ENCODE measurements at regions of chr12 and their contacts with region 1.

Region 1: DNA sequence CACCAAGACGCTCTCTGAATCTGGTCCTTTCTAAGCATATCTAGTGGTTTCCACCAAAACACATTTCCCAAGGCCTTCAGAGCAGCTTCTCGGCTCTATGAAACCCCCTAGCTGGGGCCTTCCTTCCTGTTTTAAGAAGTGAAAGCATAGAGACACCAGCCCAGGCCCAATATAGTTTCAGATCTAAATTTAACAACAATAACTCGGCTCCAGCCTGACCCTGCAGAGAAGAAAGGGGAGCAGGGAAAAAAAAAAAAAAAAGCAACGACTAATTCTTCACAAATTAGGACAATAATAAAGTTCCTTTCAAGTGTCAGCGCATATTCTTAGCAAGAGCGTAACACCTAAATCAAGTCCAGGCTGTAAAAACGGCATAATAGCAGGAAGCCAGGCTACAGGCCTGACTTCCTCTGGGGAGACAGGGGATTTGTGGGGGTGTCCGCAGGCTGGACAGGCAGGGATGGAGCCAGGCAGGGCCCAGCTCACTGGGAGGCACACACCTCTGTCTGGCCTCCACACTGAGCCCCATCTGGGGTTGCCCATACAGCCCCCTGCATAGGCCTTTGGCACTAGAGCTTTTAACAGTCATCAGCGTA is 773.1 kb downstream of the MED13L start:
- DNase-seq: no peak
- ATAC-seq: peak; percentile 32

Region 2: DNA sequence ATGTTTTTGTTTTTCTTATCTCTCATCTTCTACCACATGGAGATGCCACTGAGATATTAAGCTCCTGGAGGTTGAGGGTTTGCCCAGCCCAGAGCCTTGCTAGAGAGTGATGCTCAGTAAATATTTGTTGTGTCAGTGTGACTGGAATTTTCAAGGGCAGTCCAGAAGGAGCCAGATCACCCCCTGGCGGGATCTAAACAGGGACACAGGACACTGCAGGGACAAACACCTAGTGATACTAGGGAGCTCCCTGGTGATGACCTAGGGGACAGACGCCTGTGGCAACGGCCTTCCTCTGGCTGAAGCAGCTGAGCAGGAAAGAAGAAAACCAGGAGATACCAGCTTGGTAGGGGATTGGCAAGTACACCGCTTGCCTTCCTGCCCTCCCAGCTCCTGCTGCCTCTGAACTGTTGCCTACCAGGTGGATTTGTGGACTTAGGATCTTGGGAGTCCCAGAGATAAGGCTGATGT is 106.1 kb before region 1 on chr12:
- intact Hi-C with region 1: no loop called
- DNase-seq: no peak
- ATAC-seq: no peak

Region 3: GRCh38 chr12:115437061-115437567 is 67.3 kb before region 1 on chr12:
- intact Hi-C with region 1: loop called (anchors 1 kb)
- DNase-seq: no peak
- ATAC-seq: peak; percentile 10

Region 4: DNA sequence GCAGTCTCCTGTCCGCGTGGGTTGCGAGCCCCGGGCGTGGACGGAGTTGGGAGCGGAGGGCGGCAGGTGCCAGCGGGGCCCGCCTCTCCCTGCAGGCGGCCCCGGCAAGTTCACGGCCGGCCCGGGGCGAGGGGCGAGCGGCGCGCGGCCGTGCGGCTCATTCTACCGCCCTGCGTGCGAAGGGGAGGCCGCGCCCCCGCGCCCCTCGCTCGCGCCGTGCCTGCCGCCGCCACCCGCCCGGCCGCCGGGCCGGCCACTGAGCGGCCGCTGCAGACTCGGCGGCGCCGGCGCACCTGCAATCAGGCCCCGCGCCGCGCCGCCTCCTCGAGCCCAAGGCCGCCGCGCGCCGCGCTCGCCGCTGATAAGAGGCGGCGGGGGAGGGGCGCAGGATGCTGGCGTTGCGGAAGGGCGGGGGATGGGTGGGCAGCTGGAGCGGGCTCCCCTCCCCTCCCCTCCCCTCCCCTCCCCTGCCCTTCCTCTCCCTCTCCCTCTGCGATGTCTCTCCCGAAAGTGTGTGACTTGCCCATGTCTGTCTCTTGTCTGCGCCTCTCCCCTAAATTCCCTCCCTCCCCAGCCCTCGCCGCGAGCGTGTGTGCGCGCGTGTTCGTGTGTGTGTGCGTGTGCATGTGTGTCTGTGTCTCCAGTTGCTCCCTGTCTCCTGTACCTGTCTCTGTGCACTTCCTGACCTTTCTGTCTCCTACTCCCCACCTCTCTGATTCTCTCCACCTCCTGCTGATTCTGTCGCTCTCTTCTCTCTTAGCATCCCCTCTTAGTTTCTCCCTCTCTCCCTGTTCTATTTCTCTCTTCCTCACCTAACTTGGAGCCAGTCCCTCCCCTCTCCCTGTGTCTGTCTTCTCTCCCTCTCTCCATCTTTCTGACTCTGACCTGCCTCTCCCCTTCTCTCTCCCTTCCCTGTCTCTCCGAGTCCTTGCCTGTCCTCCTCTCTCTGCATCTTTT is 52.3 kb before region 1 on chr12:
- intact Hi-C with region 1: loop called (anchors 5 kb)
- DNase-seq: peak; percentile 74
- ATAC-seq: peak; percentile 16

Region 5: DNA sequence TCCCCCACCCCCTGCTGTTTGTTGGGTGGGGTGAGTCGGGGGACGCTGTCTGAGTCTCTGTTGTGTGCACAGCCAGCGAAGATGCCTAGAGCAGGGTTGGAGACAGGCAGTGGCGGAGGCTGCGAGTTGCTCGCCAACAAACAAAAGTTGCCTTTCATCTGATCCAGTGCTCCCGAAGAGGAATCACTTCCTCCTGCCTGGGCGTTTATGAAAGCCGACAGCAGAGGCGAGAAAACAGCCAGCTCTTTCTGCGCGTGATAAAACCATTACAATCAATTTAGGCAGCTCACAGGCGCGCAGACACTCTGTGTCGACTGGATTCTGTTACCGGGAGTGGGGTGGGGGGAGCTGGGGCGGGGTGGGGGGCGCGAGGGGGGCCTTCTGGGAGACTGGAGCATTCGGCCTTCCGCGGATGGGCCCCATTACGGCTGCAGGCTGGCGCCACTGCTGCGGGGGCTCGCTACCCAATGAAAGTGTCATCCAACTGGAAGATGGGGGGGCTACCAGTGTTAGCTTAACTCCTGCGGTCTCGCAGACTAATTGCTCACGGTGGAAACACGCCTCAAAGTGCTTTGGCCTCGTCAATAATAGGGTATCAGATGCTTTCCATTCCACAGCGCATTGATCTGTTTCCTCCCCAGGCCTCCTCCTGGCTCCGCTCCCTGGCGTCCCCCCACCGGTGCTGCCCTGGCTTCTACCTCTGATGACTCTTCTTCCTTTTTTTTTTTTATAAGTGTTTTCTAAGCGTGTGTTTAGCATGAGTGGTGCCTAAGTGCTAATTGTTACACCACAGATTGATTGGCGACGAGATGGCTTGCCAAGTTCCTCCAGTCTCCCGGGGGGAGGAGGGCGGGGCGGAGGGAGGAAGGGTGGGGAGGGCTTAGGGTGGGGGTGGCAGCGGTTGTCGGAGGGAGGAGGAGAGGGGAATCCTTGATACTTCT is 94.7 kb after region 1 on chr12:
- intact Hi-C with region 1: loop called (anchors 5 kb)
- DNase-seq: no peak
- ATAC-seq: no peak

Region 6: GRCh38 chr12:115623764-115624334 is 119.4 kb after region 1 on chr12:
- intact Hi-C with region 1: loop called (anchors 5 kb)
- DNase-seq: peak; percentile 75
- ATAC-seq: peak; percentile 67